ENCODE measurements at regions of chr17 and their contacts with region 1.

Region 1: GRCh38 chr17:38557836-38558727 is 47.7 kb downstream of the SRCIN1 start:
- DNase-seq: peak; percentile 73 to 95 (median 84)
- ATAC-seq: peak; percentile 72 to 78 (median 76)
- H3K4me3 ChIP-seq: peak overlapping the region; percentile 60 to 74
- H3K4me3 Mint-ChIP-seq: peak overlapping the region; percentile 90 to 96 (median 90)
- H3K27ac ChIP-seq: no peak overlapping the region
- H3K27ac Mint-ChIP-seq: no peak overlapping the region
- H3K4me1 ChIP-seq: peaks cover 8 to 52% of the 10 kb centered on the region in 2 experiments
- H3K4me1 Mint-ChIP-seq: peaks cover 25 to 35% (median 27%) of the 10 kb centered on the region in 3 donors
- H3K27me3 ChIP-seq: peaks cover 7 to 42% of the 10 kb centered on the region in 2 experiments
- H3K27me3 Mint-ChIP-seq: peaks cover 15 to 30% of the 10 kb centered on the region in 2 donors

Region 2: GRCh38 chr17:38379438-38379837 is 178.6 kb before region 1 on chr17:
- CTCF ChIA-PET with region 1: no interaction called
- POLR2A ChIA-PET with region 1: no interaction called
- DNase-seq: no peak
- ATAC-seq: no peak
- H3K4me3 ChIP-seq: no peak overlapping the region
- H3K4me3 Mint-ChIP-seq: no peak overlapping the region
- H3K27ac ChIP-seq: no peak overlapping the region
- H3K27ac Mint-ChIP-seq: no peak overlapping the region
- H3K4me1 ChIP-seq: no peaks in the 10 kb centered on the region
- H3K4me1 Mint-ChIP-seq: no peaks in the 10 kb centered on the region
- H3K27me3 ChIP-seq: no peaks in the 10 kb centered on the region
- H3K27me3 Mint-ChIP-seq: no peaks in the 10 kb centered on the region

Region 3: DNA sequence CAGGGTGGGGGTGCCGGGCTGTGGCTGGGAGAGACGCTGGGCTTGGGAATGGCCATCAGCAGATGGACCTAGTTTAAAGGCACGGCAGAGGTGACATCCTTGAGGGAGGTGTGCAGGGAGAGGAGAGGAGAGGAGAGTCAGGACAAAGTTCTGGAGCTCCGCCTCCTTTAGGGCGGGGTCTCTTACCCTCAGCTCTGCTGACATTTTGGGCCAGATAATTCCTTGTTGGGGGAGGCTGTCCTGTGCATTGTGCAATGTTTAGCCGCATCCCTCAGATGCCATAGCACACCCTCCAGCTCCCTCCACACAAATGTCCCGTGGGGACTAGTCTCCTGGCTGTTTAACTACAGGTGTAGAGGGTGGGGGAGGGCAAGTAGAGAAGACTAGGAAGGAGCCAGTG is 81.5 kb before region 1 on chr17:
- CTCF ChIA-PET with region 1: no interaction called
- POLR2A ChIA-PET with region 1: no interaction called
- DNase-seq: no peak
- ATAC-seq: no peak
- H3K4me3 ChIP-seq: no peak overlapping the region
- H3K4me3 Mint-ChIP-seq: no peak overlapping the region
- H3K27ac ChIP-seq: no peak overlapping the region
- H3K27ac Mint-ChIP-seq: no peak overlapping the region
- H3K4me1 ChIP-seq: no peaks in the 10 kb centered on the region
- H3K4me1 Mint-ChIP-seq: no peaks in the 10 kb centered on the region
- H3K27me3 ChIP-seq: no peaks in the 10 kb centered on the region
- H3K27me3 Mint-ChIP-seq: no peaks in the 10 kb centered on the region

Region 4: GRCh38 chr17:38533866-38534497 is 24.1 kb before region 1 on chr17:
- CTCF ChIA-PET with region 1: no interaction called
- POLR2A ChIA-PET with region 1: no interaction called
- DNase-seq: no peak
- ATAC-seq: no peak
- H3K4me3 ChIP-seq: no peak overlapping the region
- H3K4me3 Mint-ChIP-seq: no peak overlapping the region
- H3K27ac ChIP-seq: no peak overlapping the region
- H3K27ac Mint-ChIP-seq: no peak overlapping the region
- H3K4me1 ChIP-seq: no peaks in the 10 kb centered on the region
- H3K4me1 Mint-ChIP-seq: no peaks in the 10 kb centered on the region
- H3K27me3 ChIP-seq: peaks cover 0 to 41% of the 10 kb centered on the region in 2 experiments
- H3K27me3 Mint-ChIP-seq: peaks cover 21 to 49% of the 10 kb centered on the region in 2 donors

Region 5: GRCh38 chr17:38584350-38584925 is 26.4 kb after region 1 on chr17:
- CTCF ChIA-PET with region 1: interaction called, 19 to 24 read pairs
- POLR2A ChIA-PET with region 1: no interaction called
- DNase-seq: peak in 34 of 35 experiments; percentile 21 to 76 (median 42)
- ATAC-seq: peak; percentile 69 to 90 (median 78)
- H3K4me3 ChIP-seq: no peak overlapping the region
- H3K4me3 Mint-ChIP-seq: peak overlapping the region in 1 of 3 donors; percentile 22
- H3K27ac ChIP-seq: no peak overlapping the region
- H3K27ac Mint-ChIP-seq: peak overlapping the region in 1 of 2 donors; percentile 25
- H3K4me1 ChIP-seq: peaks cover 0 to 11% of the 10 kb centered on the region in 2 experiments
- H3K4me1 Mint-ChIP-seq: peaks cover 6 to 13% (median 9%) of the 10 kb centered on the region in 3 donors
- H3K27me3 ChIP-seq: peaks cover under 1 to 94% of the 10 kb centered on the region in 2 experiments
- H3K27me3 Mint-ChIP-seq: peaks cover 55 to 83% of the 10 kb centered on the region in 2 donors

Region 6: GRCh38 chr17:38667099-38667786 is 109.2 kb after region 1 on chr17:
- CTCF ChIA-PET with region 1: interaction called, 5 to 26 read pairs
- POLR2A ChIA-PET with region 1: no interaction called
- DNase-seq: peak in 19 of 35 experiments; percentile 18 to 69 (median 31)
- ATAC-seq: peak; percentile 60 to 72 (median 66)
- H3K4me3 ChIP-seq: no peak overlapping the region
- H3K4me3 Mint-ChIP-seq: no peak overlapping the region
- H3K27ac ChIP-seq: no peak overlapping the region
- H3K27ac Mint-ChIP-seq: no peak overlapping the region
- H3K4me1 ChIP-seq: peaks cover 0 to 7% of the 10 kb centered on the region in 2 experiments
- H3K4me1 Mint-ChIP-seq: peaks cover 0 to 12% (median 4%) of the 10 kb centered on the region in 3 donors
- H3K27me3 ChIP-seq: peaks cover 7 to 72% of the 10 kb centered on the region in 2 experiments
- H3K27me3 Mint-ChIP-seq: peaks cover 44 to 70% of the 10 kb centered on the region in 2 donors

Region 7: GRCh38 chr17:38967290-38967738 is 409.2 kb after region 1 on chr17 and contains the start of gene FBXO47:
- CTCF ChIA-PET with region 1: no interaction called
- POLR2A ChIA-PET with region 1: no interaction called
- DNase-seq: peak; percentile 64 to 91 (median 81)
- ATAC-seq: peak; percentile 96 to 98 (median 98)
- H3K4me3 ChIP-seq: peak within 1 kb of the TSS in 1 of 2 donors; percentile 38
- H3K4me3 Mint-ChIP-seq: peak within 1 kb of the TSS; percentile 70 to 76 (median 73)
- H3K27ac ChIP-seq: peak within 1 kb of the TSS; percentile 68
- H3K27ac Mint-ChIP-seq: peak within 1 kb of the TSS; percentile 85 to 88
- H3K4me1 ChIP-seq: peaks cover 4 to 15% of the 10 kb centered on the region in 2 experiments
- H3K4me1 Mint-ChIP-seq: peaks cover 15 to 16% (median 15%) of the 10 kb centered on the region in 3 donors
- H3K27me3 ChIP-seq: no peaks in the 10 kb centered on the region
- H3K27me3 Mint-ChIP-seq: no peaks in the 10 kb centered on the region
- total RNA-seq, gene FBXO47: not detected